Calu3 (cell line): ENCODE measurements at regions of chr10 and their contacts with region 1.

Region 1: DNA sequence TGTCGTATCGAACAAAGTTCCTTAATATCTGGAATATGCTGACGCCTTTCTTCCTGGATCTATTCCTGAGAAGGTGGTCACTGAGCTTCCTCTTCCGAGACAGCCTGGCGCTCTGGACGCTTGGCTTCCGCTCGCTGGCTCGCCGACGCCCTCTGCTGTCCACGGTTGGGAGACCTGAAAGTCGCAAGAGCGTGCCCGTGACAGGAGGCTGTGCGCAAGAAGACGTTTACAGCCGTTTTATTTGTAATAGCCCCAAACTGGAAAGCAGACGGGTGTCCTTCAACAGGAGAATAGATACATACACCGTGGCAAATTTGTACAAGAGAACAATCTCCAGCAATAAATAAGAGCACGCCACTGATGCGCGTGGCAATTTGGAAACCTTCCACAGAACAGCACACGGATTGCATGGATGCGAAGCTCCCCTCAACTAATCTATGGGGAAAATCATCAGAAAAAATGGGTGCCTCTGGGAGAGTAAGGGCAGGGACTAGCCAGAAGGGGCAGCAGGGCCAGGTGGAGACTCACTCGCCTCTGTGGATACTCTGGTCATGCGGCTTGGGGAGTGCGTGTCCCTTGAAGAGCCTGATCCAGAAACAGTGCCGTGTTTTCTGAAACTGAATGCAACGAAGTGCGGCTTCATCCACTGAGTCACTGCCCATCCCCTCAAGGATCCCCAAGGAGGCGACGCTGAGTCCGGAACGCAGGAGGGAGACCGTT is 41.5 kb upstream of the BNIP3 start:
- DNase-seq: peak; percentile 73
- H3K4me3 Mint-ChIP-seq: peak overlapping the region; percentile 39
- H3K27ac Mint-ChIP-seq: no peak overlapping the region
- H3K4me1 Mint-ChIP-seq: peaks cover 7% of the 10 kb centered on the region
- H3K27me3 Mint-ChIP-seq: peaks cover 65% of the 10 kb centered on the region
- CTCF ChIP-seq: peak; percentile 77

Region 2: DNA sequence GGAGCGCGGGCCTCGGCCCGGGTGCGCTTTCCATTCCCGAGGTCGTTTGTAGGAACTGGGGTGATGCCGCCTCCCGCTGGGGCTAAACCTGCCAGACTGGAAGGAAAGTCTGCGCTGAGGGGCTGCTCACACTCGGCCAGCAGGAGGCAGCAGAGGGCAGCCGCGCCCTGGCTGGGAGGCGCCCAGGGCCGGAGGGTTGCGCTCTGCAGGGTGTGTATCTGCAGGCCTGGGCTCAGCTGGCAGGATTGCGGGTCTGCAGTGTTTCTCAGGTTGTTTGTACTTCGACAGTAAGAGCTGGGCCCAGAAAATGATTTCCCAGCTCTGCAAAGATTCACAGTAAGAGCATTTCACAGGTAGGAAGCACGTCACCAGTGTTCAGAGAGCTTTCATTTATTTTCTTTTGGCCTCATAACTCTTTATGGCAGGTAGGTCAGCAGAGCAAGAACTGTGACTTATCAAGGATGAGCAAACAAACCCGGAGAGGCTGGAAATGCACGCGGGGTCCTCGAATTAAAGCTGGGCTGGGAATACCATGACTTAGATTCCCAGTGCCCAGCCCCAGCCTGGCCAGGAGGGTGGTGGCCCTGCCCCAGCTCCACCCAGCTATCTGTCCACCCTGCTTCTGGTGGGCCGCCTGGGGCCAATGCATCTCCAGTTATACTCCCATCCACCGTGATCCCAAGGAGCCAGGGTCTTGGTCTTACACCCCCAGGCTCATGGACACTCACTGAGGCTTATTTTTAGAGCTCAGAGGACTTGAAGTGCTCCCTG is 137.7 kb before region 1 on chr10:
- CTCF ChIA-PET with region 1: interaction called, 12 read pairs
- intact Hi-C with region 1: loop called (anchors 2 kb)
- DNase-seq: peak; percentile 84
- H3K4me3 Mint-ChIP-seq: no peak overlapping the region
- H3K27ac Mint-ChIP-seq: no peak overlapping the region
- H3K4me1 Mint-ChIP-seq: peaks cover 8% of the 10 kb centered on the region
- H3K27me3 Mint-ChIP-seq: no peaks in the 10 kb centered on the region
- CTCF ChIP-seq: peak; percentile 81